Right ventricle myocardium inferior (tissue), 1 donor: ENCODE measurements at regions of chr6 and their contacts with region 1.

Region 1: DNA sequence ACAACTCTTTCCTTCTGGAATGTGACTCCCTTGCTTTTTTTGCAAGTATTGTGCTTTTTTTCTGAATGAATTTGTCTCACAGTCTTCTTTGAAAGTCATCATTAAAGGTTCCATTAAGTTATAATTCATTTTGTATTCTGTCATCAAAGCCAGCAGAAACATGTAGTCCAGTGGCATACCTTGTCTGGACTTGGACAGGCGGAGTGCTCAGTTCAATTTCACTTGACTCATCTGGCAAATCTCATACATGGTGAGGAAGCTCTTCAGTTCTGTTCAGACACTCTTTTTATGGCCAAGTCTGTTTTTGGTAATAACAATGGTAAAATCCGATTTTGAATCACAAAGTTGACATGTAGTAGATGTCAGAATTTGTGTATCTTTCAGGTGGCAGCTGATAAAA is 260.8 kb upstream of the OPRM1 start:
- DNase-seq: no peak
- ATAC-seq: no peak

Region 2: DNA sequence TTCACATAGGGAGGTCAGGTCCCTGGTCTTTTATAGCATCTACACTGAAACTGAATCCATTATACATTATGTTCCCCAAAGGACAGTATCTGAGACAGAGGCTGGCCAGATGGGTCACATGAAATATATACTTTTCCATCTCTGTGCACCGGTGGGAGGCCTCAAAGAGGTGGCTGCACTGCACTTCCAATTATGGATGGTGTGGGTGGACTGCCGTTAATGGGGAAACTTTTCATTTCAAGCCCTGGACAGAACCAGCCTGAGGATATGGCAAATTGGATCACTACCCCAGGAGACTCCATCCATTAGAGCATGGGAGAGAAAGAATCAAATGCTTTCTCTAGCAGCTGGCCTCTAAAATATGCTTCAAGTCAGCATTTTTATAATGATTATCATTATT is 19.7 kb before region 1 on chr6:
- intact Hi-C with region 1: loop called (anchors 1 kb)
- DNase-seq: no peak
- ATAC-seq: no peak

Region 3: GRCh38 chr6:153816366-153816765 is 38.1 kb after region 1 on chr6:
- intact Hi-C with region 1: no loop called
- DNase-seq: no peak
- ATAC-seq: no peak

Region 4: DNA sequence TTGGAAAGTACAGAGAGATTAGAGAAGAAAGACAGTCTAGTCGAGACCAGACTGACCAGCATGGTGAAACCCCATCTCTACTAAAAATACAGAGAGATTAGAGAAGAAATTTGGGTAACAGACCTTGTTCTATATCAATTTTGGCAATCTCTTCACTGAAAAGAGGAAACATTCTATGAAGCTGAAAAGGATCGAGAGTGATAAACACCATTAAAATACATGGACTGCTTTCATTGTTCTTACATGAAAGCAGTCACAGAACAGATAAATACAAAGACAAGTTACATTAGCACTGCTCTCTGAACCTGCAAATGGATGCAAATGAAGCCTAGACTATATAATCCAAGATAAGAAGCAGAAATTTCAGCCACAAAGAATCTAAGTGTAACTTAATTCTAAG is 252.4 kb after region 1 on chr6:
- intact Hi-C with region 1: no loop called
- DNase-seq: no peak
- ATAC-seq: no peak